A549 (cell line): ENCODE measurements at regions of chr10 and their contacts with region 1.

Region 1: GRCh38 chr10:17075533-17076359 is 53.9 kb downstream of the CUBN start:
- DNase-seq: peak; percentile 28 to 73
- ATAC-seq: peak; percentile 96 to 99
- H3K4me3 ChIP-seq: no peak overlapping the region
- H3K27ac ChIP-seq: peak overlapping the region; percentile 73 to 79
- H3K4me1 ChIP-seq: peaks cover 23% of the 10 kb centered on the region
- CTCF ChIP-seq: no peak
- EP300 ChIP-seq: peak; percentile 46 to 65; a peak in 2 of 5 replicates
- POLR2A ChIP-seq: no peak
- RAD21 ChIP-seq: peak in 1 of 2 experiments; percentile 41; a peak in 2 of 5 replicates

Region 2: DNA sequence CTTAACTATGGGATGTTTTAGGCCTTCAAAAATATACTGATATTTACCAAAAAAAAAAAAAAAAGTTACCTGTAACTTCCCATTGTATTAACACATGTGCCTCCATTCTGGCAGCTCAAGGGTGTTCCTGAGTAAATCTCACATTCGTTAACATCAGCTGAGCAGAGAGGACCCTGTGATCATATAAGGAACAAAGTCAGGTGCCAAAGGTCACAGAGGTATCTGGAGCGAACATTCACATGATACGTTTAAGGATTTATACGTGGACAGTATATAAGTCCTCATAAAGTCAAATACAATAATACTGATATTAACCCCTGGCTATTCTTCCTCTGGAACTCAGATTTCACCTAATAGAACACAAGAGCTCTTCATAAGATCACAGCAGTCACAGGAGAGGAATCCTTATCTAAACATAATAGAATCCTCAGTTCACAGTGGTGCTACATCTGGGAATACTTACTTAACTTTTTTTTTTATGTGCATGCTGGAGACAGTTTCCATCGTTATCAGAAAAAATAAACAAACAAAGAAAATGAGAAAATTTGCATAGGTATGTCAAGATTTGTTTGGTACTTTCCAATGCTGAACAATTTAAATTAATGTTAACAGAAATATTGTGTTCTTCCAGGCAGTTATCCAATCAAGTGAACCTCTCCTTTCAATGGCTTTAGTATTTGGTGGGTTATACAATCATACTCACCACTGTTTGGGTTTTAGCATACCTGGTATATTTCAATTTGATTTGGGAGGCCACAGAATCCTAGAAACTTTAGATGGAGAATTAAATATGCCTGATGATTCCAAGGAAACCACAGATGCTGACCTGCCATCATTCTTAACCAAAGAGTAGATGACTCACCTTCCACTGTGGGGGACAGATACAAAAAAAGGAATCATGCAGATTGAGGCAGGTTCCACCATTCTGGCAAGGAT is 47.2 kb after region 1 on chr10:
- CTCF ChIA-PET with region 1: no interaction called
- POLR2A ChIA-PET with region 1: interaction called, 10 read pairs
- DNase-seq: no peak
- ATAC-seq: no peak
- H3K4me3 ChIP-seq: no peak overlapping the region
- H3K27ac ChIP-seq: no peak overlapping the region
- H3K4me1 ChIP-seq: no peaks in the 10 kb centered on the region
- CTCF ChIP-seq: no peak
- EP300 ChIP-seq: no peak
- POLR2A ChIP-seq: no peak
- RAD21 ChIP-seq: no peak

Region 3: GRCh38 chr10:17200912-17201793 is 125.4 kb after region 1 on chr10 and contains the start of gene TRDMT1:
- CTCF ChIA-PET with region 1: no interaction called
- POLR2A ChIA-PET with region 1: interaction called, 10 read pairs
- DNase-seq: peak; percentile 76 to 92
- ATAC-seq: peak; percentile 99 to 100
- H3K4me3 ChIP-seq: peak within 1 kb of the TSS; percentile 65
- H3K27ac ChIP-seq: peak within 1 kb of the TSS; percentile 88 to 96
- H3K4me1 ChIP-seq: peaks cover 15% of the 10 kb centered on the region
- CTCF ChIP-seq: no peak; the same call in 2 of the 3 replicates
- EP300 ChIP-seq: peak in 1 of 2 experiments; percentile 16; a peak in 1 of 5 replicates
- POLR2A ChIP-seq: peak; percentile 51
- RAD21 ChIP-seq: peak; percentile 34 to 39
- polyA plus RNA-seq, gene TRDMT1: 5.7 and 7.4 TPM in 2 replicates